Dendritic cell treated with granulocyte-macrophage colony-stimulating factor and Interleukin-4, amounts not matched to agents 40 ng/mL and 50 ng/mL, for 4 days (primary cell): ENCODE measurements at regions of chr20 and their contacts with region 1.

Region 1: GRCh38 chr20:49484180-49485140 is 2.0 kb upstream of the KCNB1 start:
- H3K4me3 Mint-ChIP-seq: peak overlapping the region; percentile 45
- H3K27ac Mint-ChIP-seq: no peak overlapping the region
- H3K4me1 Mint-ChIP-seq: peaks cover 8% of the 10 kb centered on the region
- H3K27me3 Mint-ChIP-seq: peaks cover 75% of the 10 kb centered on the region

Region 2: DNA sequence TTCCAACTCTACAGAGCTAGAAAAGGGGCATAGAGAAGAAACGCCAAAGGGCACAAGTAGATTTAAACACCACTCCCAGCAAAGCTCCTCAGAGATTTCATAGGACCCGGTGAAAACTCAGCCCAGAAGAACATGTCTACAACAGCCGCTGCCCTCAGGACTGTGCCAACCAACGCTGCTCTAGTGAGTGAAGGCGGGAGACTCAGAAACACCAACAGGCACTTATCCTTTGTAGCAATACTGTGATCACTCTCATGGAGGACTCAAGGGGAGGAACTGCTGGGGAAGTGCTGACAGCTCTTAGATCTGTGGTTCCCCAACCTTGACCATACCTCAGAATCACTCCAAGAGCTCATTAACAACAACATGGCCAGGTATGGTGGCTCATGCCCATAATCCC is 335.9 kb before region 1 on chr20:
- intact Hi-C with region 1: no loop called
- H3K4me3 Mint-ChIP-seq: no peak overlapping the region
- H3K27ac Mint-ChIP-seq: no peak overlapping the region
- H3K4me1 Mint-ChIP-seq: no peaks in the 10 kb centered on the region
- H3K27me3 Mint-ChIP-seq: no peaks in the 10 kb centered on the region

Region 3: DNA sequence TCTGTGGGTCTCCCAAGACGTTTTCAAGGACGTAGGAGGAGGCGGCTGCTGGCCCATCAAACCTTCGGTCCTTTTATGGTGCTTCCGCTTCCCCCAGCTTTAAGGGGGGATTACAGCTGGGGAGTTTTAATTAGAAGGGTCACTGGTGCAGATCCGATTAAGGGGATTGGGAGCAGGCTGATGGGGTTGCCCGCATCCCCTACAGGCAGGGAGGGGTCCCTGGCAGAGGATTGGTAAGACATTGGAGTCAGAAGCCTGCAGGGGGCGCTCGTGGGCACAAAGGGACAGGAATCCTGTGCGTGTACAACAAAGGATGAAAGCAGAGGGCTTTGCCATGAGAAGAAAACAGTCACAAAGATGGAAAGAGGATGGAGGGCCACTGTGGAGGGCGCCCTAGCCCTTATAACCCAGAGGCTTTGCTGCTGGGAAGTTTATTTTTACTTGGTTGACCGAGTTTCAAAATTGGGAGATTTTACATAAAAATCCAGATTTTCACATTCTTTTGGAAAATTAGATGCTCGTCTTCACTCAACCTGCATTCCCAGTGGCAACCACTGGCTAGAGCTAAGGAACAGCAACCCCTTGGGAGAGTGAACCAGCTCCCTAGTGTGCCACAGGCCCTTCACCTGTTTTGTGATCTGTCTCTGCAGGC is 99.9 kb before region 1 on chr20:
- intact Hi-C with region 1: loop called (anchors 10 kb)
- H3K4me3 Mint-ChIP-seq: no peak overlapping the region
- H3K27ac Mint-ChIP-seq: no peak overlapping the region
- H3K4me1 Mint-ChIP-seq: peaks cover 4% of the 10 kb centered on the region
- H3K27me3 Mint-ChIP-seq: peaks cover 18% of the 10 kb centered on the region